ENCODE measurements at regions of chr3 and their contacts with region 1.

Region 1: DNA sequence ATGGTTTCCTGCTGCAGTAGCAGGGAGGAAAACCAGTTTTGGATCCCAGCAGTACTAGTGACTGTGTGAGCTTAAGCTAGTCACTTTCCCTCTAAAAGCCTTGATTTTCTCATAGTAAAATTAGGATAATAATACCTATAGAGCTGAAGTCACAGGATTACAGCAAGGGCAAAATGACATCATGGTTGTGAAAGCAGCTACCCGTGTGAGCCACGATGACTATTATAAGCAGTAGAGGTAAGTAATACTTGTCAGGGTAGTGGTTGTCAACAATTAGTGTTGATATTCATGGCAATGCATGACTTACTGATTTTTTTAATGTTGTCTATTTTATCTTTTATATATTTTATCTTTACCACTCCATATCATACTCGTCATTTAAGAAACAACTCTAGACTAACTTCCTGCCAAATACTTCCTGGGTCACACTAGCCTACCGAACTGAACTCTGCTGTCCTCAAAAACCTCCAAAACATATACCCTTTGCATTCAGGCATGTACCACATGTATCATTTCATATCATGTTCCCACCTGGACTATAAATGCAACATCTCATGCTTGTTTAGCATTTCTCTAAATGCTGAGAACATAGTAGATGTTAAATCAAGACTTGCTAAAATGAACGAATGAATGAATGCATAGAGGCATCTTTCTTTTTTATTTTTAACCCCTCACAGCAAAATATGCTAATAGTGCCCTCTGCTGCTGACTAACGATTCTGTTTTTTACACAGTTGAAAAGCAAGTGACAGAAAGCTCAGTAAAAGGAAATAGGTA is 172.6 kb downstream of the P3H2 start:
- DNase-seq: no peak
- H3K4me3 ChIP-seq: no peak overlapping the region
- H3K4me1 ChIP-seq: no peaks in the 10 kb centered on the region
- H3K27me3 ChIP-seq: 0 out of 2 replicates have a peak, but pooled peaks cover 4% of the 10 kb centered on the region

Region 2: GRCh38 chr3:189270248-189270832 is 677.8 kb before region 1 on chr3:
- in situ Hi-C with region 1: loop called (anchors 10 kb)
- DNase-seq: peak; percentile 16 to 43
- H3K4me3 ChIP-seq: no peak overlapping the region
- H3K4me1 ChIP-seq: no peaks in the 10 kb centered on the region; the same call in 1 of the 2 replicates
- H3K27me3 ChIP-seq: peaks cover 2% of the 10 kb centered on the region; the same call in 1 of the 2 replicates